ENCODE measurements at regions of chr11 and their contacts with region 1.

Region 1: GRCh38 chr11:110296226-110297075 is at the start of gene RDX:
- DNase-seq: peak; percentile 22 to 89 (median 77)

Region 2: DNA sequence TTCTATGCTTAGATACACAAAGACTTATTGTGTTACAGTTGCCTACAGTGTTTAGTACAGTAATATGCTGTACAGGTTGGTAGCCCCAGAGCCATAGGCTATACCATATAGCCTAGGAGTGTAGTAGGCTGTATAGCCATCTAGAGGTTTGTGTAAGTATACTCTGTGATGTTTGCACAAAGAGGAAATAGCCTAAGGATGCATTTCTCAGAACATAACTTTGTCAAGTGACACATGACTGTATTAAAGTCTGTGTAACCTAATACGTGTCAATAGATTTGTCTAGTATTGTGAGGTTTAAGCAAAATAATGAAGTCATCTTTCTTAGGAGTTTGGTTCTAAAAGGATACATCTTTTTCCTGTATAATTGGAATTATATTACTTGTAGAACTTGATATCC is 197.8 kb before region 1 on chr11:
- intact Hi-C with region 1: no loop called
- DNase-seq: no peak

Region 3: DNA sequence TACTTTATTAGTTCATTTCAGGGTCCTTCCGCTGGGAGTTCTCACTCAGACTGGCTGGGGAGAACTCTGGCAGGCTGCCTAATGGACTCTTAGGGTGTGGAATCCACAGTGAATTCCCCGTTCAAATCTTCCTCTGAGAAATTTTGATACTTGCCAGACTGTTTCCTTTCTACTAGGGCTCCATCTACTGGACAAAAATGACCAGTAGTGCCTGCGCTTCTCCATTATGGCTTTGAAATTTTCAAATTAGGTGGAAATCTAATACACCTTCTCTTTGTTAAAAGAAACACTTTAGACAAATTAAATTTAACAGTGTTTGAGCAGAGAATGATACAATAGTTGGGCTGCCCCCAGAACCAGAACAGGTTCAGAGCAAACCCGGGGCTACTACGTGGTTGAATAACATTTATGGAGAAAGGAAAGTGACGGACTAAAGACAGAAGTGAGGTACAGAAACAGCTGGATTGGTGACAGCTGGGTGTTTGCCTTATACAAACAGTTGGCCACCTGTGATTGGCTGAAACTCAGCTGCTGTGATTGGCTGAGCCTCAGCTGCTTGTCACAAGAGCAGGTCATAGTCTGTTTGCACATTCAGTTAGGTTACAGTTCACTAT is 80.4 kb after region 1 on chr11:
- intact Hi-C with region 1: loop called (anchors 10 kb)
- DNase-seq: peak in 40 of 42 donors; percentile 5 to 83 (median 55)

Region 4: GRCh38 chr11:110429731-110430266 is 133.3 kb after region 1 on chr11 and contains the start of gene FDX1:
- intact Hi-C with region 1: loop called (anchors 10 kb)
- DNase-seq: peak; percentile 54 to 91 (median 82)